GM12878 (cell line): ENCODE measurements at regions of chr17 and their contacts with region 1.

Region 1: GRCh38 chr17:56779898-56780733 is 53.6 kb downstream of the C17orf67 start:
- DNase-seq: no peak
- ATAC-seq: peak; percentile 99
- H3K4me3 ChIP-seq: peak overlapping the region; percentile 39; the same call in 1 of the 2 replicates
- H3K27ac ChIP-seq: no peak overlapping the region
- H3K4me1 ChIP-seq: no peaks in the 10 kb centered on the region; the same call in 1 of the 2 replicates
- H3K27me3 ChIP-seq: peaks cover 2% of the 10 kb centered on the region in 2 experiments; a peak in 1 of 4 replicates
- CTCF ChIP-seq: peak; percentile 94 to 97 (median 95)
- EP300 ChIP-seq: no peak
- POLR2A ChIP-seq: no peak
- RAD21 ChIP-seq: peak; percentile 67

Region 2: GRCh38 chr17:56792285-56792684 is 12.2 kb after region 1 on chr17:
- CTCF ChIA-PET with region 1: interaction called, 22 read pairs
- POLR2A ChIA-PET with region 1: no interaction called
- RAD21 ChIA-PET with region 1: no interaction called
- SMC1A ChIA-PET with region 1: interaction called, 4 read pairs
- in situ Hi-C with region 1: no loop called
- intact Hi-C with region 1: no loop called
- DNase-seq: no peak
- ATAC-seq: no peak
- H3K4me3 ChIP-seq: no peak overlapping the region
- H3K27ac ChIP-seq: no peak overlapping the region
- H3K4me1 ChIP-seq: peaks cover 4% of the 10 kb centered on the region
- H3K27me3 ChIP-seq: no peaks in the 10 kb centered on the region; a peak in 1 of 4 replicates
- CTCF ChIP-seq: no peak
- EP300 ChIP-seq: no peak
- POLR2A ChIP-seq: no peak
- RAD21 ChIP-seq: no peak